ENCODE measurements at regions of chr2 and their contacts with region 1.

Region 1: DNA sequence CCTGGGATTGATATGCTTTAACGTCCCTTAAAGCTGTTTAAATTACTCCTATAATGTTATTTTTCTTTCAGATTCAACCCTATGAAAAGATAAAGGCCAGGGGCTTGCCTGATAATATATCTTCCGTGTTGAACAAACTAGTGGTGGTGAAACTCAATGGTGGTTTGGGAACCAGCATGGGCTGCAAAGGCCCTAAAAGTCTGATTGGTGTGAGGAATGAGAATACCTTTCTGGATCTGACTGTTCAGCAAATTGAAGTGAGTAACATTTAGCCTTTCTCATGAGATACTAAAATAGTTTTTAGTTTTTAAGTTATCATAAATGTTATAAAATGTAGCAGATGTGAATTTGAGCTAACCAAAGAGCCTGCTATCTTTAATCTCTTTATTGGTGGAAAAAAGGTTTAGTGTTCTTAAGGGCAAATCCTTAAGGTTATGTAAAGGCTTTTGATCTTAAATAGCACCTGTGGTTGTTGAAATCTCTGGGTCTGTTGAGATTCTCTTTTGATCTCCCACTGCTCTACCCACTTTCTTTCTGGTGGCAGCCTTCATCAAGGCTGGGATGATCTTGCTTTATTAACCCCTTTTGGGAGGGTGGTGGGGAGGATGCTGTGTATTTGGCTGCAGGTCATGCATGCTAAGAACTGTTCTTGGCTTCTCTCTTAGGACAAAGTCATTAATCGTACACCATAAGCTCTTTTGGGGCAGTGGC is 40.9 kb downstream of the UGP2 start:
- DNase-seq: no peak
- ATAC-seq: no peak
- H3K4me3 ChIP-seq: no peak overlapping the region
- H3K4me3 Mint-ChIP-seq: no peak overlapping the region
- H3K27ac ChIP-seq: no peak overlapping the region
- H3K27ac Mint-ChIP-seq: peak overlapping the region; percentile 12
- H3K4me1 ChIP-seq: no peaks in the 10 kb centered on the region
- H3K4me1 Mint-ChIP-seq: peaks cover 36% of the 10 kb centered on the region
- H3K27me3 ChIP-seq: no peaks in the 10 kb centered on the region
- H3K27me3 Mint-ChIP-seq: no peaks in the 10 kb centered on the region
- CTCF ChIP-seq: no peak

Region 2: GRCh38 chr2:63903003-63903402 is 20.5 kb after region 1 on chr2:
- CTCF ChIA-PET with region 1: no interaction called
- POLR2A ChIA-PET with region 1: no interaction called
- intact Hi-C with region 1: loop called in 1 of 2 experiments (anchors 2 kb)
- DNase-seq: no peak
- ATAC-seq: no peak
- H3K4me3 ChIP-seq: no peak overlapping the region
- H3K4me3 Mint-ChIP-seq: no peak overlapping the region
- H3K27ac ChIP-seq: no peak overlapping the region
- H3K27ac Mint-ChIP-seq: no peak overlapping the region
- H3K4me1 ChIP-seq: no peaks in the 10 kb centered on the region
- H3K4me1 Mint-ChIP-seq: peaks cover 5% of the 10 kb centered on the region
- H3K27me3 ChIP-seq: no peaks in the 10 kb centered on the region
- H3K27me3 Mint-ChIP-seq: no peaks in the 10 kb centered on the region
- CTCF ChIP-seq: no peak

Region 3: GRCh38 chr2:64036034-64036705 is 153.6 kb after region 1 on chr2:
- CTCF ChIA-PET with region 1: no interaction called
- POLR2A ChIA-PET with region 1: no interaction called
- intact Hi-C with region 1: no loop called
- DNase-seq: peak in 5 of 14 experiments; percentile 10 to 82 (median 74)
- ATAC-seq: peak; percentile 96
- H3K4me3 ChIP-seq: no peak overlapping the region
- H3K4me3 Mint-ChIP-seq: peak overlapping the region; percentile 70
- H3K27ac ChIP-seq: no peak overlapping the region
- H3K27ac Mint-ChIP-seq: peak overlapping the region; percentile 63
- H3K4me1 ChIP-seq: peaks cover 17% of the 10 kb centered on the region
- H3K4me1 Mint-ChIP-seq: peaks cover 51% of the 10 kb centered on the region
- H3K27me3 ChIP-seq: no peaks in the 10 kb centered on the region
- H3K27me3 Mint-ChIP-seq: no peaks in the 10 kb centered on the region
- CTCF ChIP-seq: no peak

Region 4: DNA sequence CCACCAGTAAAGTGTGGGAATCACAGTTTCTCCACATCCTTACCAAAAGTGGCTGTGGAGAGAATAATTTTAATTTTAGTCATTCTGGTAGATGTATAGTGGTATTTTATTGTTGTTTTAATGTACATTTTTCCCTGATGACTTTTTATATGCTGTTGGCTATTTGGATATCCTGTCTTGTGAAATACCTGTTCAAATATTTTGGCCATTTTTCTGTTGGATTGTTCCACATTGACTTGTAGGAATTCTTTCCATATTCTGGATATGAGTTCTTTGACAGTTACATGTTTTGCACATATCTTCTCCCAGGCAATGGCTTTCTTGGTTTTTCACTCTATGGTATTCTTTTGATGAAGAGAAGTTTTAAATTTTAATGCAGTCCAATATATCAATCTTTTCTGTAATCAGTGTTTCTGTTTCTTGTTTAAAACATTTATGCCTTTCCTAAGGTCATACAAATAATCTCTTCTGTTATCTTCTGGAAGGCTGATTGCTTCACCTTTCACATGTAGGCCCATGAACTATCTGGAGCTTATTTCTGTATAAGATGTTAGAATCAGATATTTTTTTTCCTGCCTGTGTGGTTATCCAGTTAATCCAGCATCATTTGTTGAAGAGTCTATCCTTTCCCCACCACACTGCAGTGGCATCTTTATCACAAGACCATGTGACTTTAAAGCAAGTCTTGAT is 660.6 kb after region 1 on chr2:
- CTCF ChIA-PET with region 1: no interaction called
- POLR2A ChIA-PET with region 1: no interaction called
- intact Hi-C with region 1: no loop called
- DNase-seq: no peak
- ATAC-seq: no peak
- H3K4me3 ChIP-seq: no peak overlapping the region
- H3K4me3 Mint-ChIP-seq: no peak overlapping the region
- H3K27ac ChIP-seq: no peak overlapping the region
- H3K27ac Mint-ChIP-seq: peak overlapping the region; percentile 31
- H3K4me1 ChIP-seq: peaks cover 4% of the 10 kb centered on the region
- H3K4me1 Mint-ChIP-seq: peaks cover 61% of the 10 kb centered on the region
- H3K27me3 ChIP-seq: no peaks in the 10 kb centered on the region
- H3K27me3 Mint-ChIP-seq: no peaks in the 10 kb centered on the region
- CTCF ChIP-seq: no peak

Measured in CD4-positive, alpha-beta T cell (primary cell).